PC-9 (cell line): ENCODE measurements at regions of chr3 and their contacts with region 1.

Region 1: DNA sequence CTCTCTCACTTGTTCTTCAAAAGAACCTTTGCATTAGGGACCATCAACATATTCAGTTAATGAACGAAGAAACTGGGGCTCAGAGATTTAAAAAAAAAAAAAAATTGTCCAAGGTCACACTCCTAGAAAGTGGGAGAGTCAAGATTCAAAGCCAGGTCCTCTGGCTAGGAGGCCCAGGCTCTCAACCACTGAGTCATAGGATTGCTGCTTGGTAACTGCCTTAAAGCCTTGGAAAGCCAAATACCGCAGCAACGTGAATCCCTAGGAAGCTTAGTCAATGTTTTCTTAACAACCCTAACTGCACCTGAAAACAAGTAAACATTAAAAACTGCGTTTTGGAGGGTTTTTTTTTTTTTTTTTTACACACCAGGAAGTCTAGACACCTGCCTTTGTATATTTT is 156.8 kb downstream of the WNT5A start:
- DNase-seq: peak; percentile 70 to 96
- H3K4me3 ChIP-seq: no peak overlapping the region
- H3K27ac ChIP-seq: peak overlapping the region; percentile 53
- H3K4me1 ChIP-seq: peaks cover 19% of the 10 kb centered on the region
- H3K27me3 ChIP-seq: no peaks in the 10 kb centered on the region
- CTCF ChIP-seq: no peak

Region 2: DNA sequence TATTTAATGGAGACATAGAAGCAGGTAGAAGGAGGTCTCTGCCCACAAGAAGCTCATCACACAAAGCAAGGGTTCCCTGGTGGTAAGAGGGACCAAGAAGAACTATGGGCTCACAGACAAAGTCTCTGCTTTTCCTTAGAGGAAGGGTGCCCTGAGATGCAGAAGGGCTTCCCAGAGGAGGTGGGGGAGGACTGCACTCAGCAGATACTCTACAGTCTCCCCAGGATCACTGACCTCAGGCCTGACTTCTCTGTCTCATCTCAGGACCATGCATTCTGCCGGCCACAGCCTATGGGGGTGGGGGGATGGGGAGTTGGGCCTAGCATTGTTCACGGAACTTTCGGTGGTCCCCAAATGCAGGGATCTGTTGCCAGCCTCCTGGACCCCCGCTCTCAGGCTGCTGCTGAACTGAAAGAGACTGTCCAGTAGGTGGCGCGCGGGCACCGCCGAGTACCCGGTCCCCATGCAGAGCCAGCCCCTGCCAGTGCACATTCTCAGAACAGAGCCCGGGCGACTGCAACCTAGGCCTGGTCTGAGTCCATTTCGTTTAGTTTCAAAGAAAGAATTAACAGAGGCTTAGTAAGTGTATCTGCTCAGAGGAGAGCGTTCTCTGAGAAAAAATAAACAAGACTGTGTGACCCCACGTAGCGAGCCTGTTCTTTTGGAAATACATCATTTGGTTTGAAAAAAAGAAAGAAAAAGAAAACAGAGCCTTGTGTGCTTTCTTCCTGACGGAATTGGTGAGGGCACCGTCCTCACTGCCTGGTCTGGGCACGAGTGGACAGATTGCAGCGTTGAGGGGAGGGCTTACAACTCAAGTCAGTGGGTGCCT is 476.6 kb before region 1 on chr3:
- CTCF ChIA-PET with region 1: no interaction called
- POLR2A ChIA-PET with region 1: interaction called, 14 read pairs
- intact Hi-C with region 1: no loop called
- DNase-seq: peak in 1 of 2 experiments; percentile 67
- H3K4me3 ChIP-seq: no peak overlapping the region
- H3K27ac ChIP-seq: no peak overlapping the region
- H3K4me1 ChIP-seq: no peaks in the 10 kb centered on the region
- H3K27me3 ChIP-seq: no peaks in the 10 kb centered on the region
- CTCF ChIP-seq: peak; percentile 93

Region 3: DNA sequence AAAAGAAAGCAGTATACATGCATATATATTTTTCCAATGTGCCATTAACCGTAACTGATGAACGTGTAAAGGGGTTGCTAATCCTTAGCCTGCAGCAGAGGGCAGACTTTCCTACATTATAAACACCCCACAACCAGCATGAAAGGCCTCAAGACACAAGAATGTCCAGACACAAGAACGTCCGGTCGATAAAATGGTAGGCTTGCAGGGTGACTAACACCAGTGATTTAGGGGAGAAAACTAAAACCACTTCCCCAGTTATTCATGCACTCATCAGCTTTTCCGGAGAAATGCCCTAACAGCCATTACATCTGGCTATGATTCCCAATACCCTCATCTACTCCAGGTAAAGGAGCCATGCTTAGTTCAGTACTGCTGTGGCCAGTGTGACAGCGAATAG is 459.9 kb before region 1 on chr3:
- CTCF ChIA-PET with region 1: no interaction called
- POLR2A ChIA-PET with region 1: no interaction called
- intact Hi-C with region 1: loop called (anchors 5 kb)
- DNase-seq: peak; percentile 48 to 72
- H3K4me3 ChIP-seq: no peak overlapping the region
- H3K27ac ChIP-seq: no peak overlapping the region; the same call in 1 of the 2 replicates
- H3K4me1 ChIP-seq: peaks cover 17% of the 10 kb centered on the region
- H3K27me3 ChIP-seq: no peaks in the 10 kb centered on the region
- CTCF ChIP-seq: peak; percentile 68

Region 4: GRCh38 chr3:55160241-55160983 is 169.9 kb before region 1 on chr3:
- CTCF ChIA-PET with region 1: no interaction called
- POLR2A ChIA-PET with region 1: no interaction called
- intact Hi-C with region 1: loop called (anchors 1 kb)
- DNase-seq: peak; percentile 81 to 87
- H3K4me3 ChIP-seq: 0 out of 2 replicates have a peak overlapping the region, but pooled peaks have one; percentile 7
- H3K27ac ChIP-seq: peak overlapping the region; percentile 57
- H3K4me1 ChIP-seq: peaks cover 15% of the 10 kb centered on the region
- H3K27me3 ChIP-seq: no peaks in the 10 kb centered on the region
- CTCF ChIP-seq: no peak

Region 5: DNA sequence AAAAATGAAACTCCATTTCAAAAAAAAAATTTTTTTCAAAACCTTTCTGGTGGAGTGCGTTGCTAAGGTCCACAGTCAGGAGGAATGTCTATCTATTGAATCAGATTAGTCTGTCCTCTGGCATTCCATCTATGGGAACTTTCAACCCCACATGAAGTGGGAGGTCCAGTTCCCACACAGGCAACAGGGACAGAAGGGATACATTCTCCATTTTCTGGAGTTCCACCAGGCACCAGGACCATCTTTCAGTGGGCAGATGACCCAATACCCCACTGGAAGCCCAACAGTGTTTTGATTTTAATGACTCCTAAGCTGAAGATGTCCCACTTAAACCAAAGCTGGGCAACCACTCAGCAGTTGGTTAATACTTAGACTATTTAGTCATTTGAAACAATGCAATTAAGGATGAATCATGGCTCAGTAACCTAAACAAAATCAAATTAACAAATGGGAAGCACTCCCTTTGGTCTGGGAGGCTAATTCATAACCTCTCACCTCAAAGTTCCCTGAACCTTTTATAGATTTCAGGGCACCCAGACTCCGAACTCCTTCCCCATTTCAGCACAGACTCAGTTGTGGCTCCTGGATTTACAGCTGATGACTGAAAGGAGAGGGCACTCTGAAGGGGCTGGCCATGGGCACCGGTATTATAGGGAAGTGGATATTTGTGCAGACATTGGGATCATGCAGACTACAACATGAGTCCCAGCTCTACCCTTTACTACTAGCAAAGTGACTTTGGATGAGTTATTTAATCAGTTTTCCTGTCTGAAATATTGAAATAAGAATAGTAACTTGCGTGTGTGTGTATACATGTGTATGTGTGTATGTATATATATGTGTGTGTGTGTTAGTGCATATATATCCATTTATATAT is 138.2 kb before region 1 on chr3:
- CTCF ChIA-PET with region 1: no interaction called
- POLR2A ChIA-PET with region 1: no interaction called
- intact Hi-C with region 1: loop called (anchors 1 kb)
- DNase-seq: peak; percentile 52 to 83
- H3K4me3 ChIP-seq: no peak overlapping the region
- H3K27ac ChIP-seq: peak overlapping the region; percentile 93
- H3K4me1 ChIP-seq: peaks cover 18% of the 10 kb centered on the region
- H3K27me3 ChIP-seq: no peaks in the 10 kb centered on the region
- CTCF ChIP-seq: no peak

Region 6: GRCh38 chr3:55416351-55416821 is 86.0 kb after region 1 on chr3:
- CTCF ChIA-PET with region 1: no interaction called
- POLR2A ChIA-PET with region 1: no interaction called
- intact Hi-C with region 1: loop called (anchors 1 kb)
- DNase-seq: peak; percentile 81 to 93
- H3K4me3 ChIP-seq: no peak overlapping the region
- H3K27ac ChIP-seq: peak overlapping the region; percentile 54
- H3K4me1 ChIP-seq: peaks cover 20% of the 10 kb centered on the region
- H3K27me3 ChIP-seq: no peaks in the 10 kb centered on the region
- CTCF ChIP-seq: no peak